ENCODE measurements at regions of chr13 and their contacts with region 1.

Region 1: GRCh38 chr13:102845630-102846260 is at the start of gene ERCC5:
- DNase-seq: peak; percentile 96
- H3K4me3 ChIP-seq: peak within 1 kb of the TSS; percentile 84 to 97 (median 93)
- H3K27ac ChIP-seq: peak within 1 kb of the TSS; percentile 94 to 100 (median 98)
- H3K4me1 ChIP-seq: peaks cover 21 to 52% (median 44%) of the 10 kb centered on the region in 6 donors
- H3K27me3 ChIP-seq: no peaks in the 10 kb centered on the region
- CTCF ChIP-seq: peak in 3 of 11 experiments; percentile 17 to 18 (median 17)
- POLR2A ChIP-seq: peak in 2 of 3 donors; percentile 64 to 79
- total RNA-seq, gene ERCC5: 55.1 to 101 (median 76.6) TPM

Region 2: GRCh38 chr13:102580552-102581169 is 265.1 kb before region 1 on chr13:
- intact Hi-C with region 1: loop called (anchors 5 kb)
- DNase-seq: no peak
- H3K4me3 ChIP-seq: no peak overlapping the region
- H3K27ac ChIP-seq: no peak overlapping the region
- H3K4me1 ChIP-seq: peaks cover 0 to 10% (median 2%) of the 10 kb centered on the region in 6 donors
- H3K27me3 ChIP-seq: no peaks in the 10 kb centered on the region
- CTCF ChIP-seq: peak; percentile 63 to 86 (median 76)
- POLR2A ChIP-seq: no peak

Measured in spleen (tissue), 13 donors.